ENCODE measurements at regions of chr7 and their contacts with region 1.

Region 1: DNA sequence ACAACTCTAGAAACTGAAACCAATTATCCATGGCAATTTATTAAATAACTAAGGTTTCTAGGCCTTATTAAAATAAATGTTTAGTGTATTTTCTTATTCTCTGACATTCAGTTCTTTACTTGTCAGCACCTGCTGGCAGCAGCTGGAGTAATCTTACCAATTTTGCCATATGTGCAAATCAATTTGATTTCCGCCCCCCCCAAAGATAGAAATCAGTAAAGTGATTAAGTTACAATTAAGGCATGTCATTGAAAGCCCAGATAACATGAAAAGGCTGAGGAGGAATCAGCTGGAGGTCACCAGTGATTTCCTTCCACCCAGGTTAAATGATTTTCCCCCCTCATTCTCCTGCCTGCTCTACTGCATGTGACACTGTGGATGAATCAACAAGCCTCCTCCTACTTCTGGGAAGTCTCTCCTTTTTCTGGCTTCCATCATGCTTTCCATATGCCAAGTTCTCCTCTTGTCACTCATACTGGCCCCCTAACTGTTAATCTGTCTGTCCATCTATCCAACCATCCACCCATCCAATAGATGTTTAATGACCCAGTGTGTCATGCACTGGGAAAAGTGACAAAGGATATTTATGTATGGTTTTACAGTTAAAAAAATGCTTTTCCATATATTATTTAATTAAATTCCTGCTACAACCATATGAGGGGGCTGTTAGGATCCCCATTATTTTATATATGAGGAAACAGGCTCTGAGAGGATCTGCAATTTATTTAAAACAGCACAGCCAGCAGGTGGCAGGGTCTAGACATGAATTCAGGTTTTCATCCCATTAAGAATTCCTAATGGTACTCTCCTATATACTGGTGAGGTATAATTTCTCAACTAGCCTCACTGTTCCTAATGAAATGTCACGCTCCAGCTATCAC is 116.5 kb downstream of the ATXN7L1 start:
- DNase-seq: peak; percentile 48
- H3K4me3 Mint-ChIP-seq: no peak overlapping the region
- H3K27ac Mint-ChIP-seq: no peak overlapping the region
- H3K4me1 Mint-ChIP-seq: peaks cover 28% of the 10 kb centered on the region
- H3K27me3 Mint-ChIP-seq: no peaks in the 10 kb centered on the region

Region 2: DNA sequence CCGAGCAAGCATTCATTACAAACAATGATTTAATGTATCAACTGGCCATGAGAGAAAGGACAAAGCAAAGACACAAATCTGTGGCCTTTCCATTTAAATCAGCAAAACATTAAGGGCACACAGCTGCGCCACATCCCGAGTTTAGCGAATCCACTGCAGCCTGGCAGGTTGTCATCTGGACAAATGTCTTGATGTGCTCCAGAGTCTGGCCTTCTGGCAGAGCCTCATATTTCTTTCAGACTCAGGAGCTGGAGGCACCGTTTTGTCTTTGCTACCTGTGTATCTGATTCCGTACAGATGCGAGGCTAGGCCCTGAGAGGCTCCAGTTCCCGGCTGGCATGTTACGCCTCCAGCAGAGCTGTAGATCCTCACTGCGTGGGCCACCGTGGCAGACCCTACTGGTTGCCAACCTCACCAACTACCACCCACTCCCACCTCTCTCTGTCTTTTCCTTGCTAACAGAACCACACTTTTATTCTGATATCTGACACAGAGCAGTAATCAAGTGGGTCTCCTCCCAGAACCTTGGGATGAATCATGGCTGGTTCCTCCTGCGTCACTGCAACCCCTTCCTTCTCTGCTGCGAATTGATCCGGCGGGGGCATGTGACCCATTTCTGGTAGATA is 137.7 kb before region 1 on chr7:
- CTCF ChIA-PET with region 1: no interaction called
- intact Hi-C with region 1: no loop called
- DNase-seq: no peak
- H3K4me3 Mint-ChIP-seq: no peak overlapping the region
- H3K27ac Mint-ChIP-seq: no peak overlapping the region
- H3K4me1 Mint-ChIP-seq: no peaks in the 10 kb centered on the region
- H3K27me3 Mint-ChIP-seq: no peaks in the 10 kb centered on the region

Region 3: GRCh38 chr7:105738133-105738532 is 21.8 kb before region 1 on chr7:
- CTCF ChIA-PET with region 1: interaction called, 12 read pairs
- intact Hi-C with region 1: no loop called
- DNase-seq: no peak
- H3K4me3 Mint-ChIP-seq: no peak overlapping the region
- H3K27ac Mint-ChIP-seq: no peak overlapping the region
- H3K4me1 Mint-ChIP-seq: peaks cover 4% of the 10 kb centered on the region
- H3K27me3 Mint-ChIP-seq: no peaks in the 10 kb centered on the region

Region 4: DNA sequence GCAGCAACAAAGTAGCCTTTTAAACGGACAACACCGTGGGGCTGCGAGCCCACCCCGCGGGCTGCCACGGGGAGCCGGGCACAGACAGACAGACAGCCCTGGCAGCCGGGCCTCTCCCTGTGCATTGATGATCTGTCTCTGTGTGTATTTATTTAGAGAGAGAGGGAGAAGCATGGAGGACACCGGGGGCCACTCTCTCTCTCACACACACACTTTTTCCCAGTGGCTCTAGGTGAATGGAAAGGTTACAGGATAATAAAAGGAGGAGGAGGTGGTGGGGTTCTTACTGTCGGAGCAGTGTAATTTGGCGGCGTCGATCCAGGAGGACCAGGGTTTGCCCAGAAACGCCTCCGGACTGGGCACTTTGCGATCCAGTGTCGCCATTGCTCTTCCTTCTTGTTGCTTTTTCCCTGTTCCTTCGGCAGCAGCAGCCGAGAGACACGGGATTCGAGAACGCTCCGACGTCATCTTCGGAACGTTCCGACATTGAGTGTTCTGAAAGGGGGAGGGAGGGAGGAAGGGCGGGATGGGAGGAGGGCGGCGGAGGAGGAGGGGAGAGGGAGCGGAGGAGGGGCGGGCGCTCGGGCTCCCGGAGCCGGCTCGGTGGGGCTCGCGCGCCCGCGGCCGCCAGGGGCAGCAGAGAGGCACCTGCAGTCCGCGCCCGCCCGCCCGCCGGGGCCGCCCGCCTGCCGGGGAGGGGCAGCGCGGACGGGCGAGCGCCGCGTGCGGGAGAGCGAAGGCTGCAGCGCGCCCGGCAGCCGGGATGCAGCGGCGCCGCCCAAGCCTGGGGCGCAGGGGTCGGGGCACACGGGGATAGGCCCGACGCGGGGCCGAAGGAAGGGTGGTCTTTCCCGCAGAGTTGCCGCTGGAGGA is 116.4 kb after region 1 on chr7 and contains the start of gene ATXN7L1:
- CTCF ChIA-PET with region 1: interaction called, 11 read pairs
- intact Hi-C with region 1: loop called (anchors 1 kb)
- DNase-seq: peak; percentile 93
- H3K4me3 Mint-ChIP-seq: peak within 1 kb of the TSS; percentile 91
- H3K27ac Mint-ChIP-seq: peak within 1 kb of the TSS; percentile 82
- H3K4me1 Mint-ChIP-seq: peaks cover 58% of the 10 kb centered on the region
- H3K27me3 Mint-ChIP-seq: no peaks in the 10 kb centered on the region
- total RNA-seq, gene ATXN7L1: 8.8 to 9.2 TPM

Region 5: DNA sequence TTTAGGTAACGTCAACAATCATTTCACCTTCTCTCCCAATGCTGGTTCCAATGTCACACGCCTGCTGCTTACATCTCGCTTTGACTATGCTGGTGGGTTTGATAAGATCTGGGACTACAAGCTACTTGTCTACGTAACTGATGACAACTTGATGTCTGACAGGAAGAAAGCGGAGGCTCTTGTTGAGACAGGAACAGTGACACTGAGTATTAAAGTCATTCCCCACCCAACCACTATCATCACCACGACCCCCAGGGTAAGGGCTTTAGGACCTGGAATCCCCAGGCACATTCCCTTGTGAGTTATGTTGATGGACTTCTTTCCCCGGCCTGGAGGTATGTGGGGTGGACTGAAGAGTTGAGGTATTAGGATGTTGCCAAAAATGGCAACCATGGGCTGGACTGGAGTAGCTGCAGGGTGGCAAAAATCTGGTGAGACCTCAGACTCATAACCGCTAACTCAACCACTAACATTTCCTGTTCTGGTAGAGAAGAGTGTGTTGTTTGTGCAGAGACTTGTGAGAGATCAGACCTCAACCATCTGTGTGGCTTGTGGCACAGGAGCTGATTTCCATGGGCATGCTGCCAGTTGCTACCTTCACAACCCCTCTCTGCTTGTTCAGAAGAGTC is 262.4 kb after region 1 on chr7:
- CTCF ChIA-PET with region 1: interaction called, 13 read pairs
- intact Hi-C with region 1: no loop called
- DNase-seq: peak; percentile 82
- H3K4me3 Mint-ChIP-seq: peak overlapping the region; percentile 19
- H3K27ac Mint-ChIP-seq: peak overlapping the region; percentile 62
- H3K4me1 Mint-ChIP-seq: peaks cover 71% of the 10 kb centered on the region
- H3K27me3 Mint-ChIP-seq: no peaks in the 10 kb centered on the region

Region 6: DNA sequence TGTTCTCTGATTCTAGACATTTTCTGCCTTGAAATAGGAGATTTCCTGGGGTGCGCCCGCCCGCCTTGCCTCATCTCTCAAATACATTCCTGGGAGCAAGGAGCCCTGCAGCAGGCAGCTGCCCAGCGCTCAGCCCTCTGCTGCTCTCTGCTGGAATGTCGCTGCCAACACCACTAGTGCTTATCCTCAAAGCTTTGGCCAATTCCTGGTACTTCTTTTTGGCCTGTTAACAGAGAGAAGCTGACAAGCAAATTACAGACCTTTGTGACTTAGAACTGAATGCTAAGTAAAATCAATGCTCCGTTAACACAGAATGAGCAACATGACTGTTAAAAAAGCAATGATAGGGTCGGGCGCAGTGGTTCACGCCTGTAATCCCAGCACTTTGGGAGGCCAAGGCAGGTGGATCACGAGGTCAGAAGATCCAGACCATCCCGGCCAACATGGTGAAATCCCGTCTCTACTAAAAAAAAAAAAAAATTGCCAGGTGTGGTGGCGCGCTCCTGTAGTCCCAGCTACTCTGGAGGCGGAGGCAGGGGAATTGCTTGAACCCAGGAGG is 394.1 kb after region 1 on chr7:
- CTCF ChIA-PET with region 1: no interaction called
- intact Hi-C with region 1: loop called (anchors 2 kb)
- DNase-seq: peak; percentile 84
- H3K4me3 Mint-ChIP-seq: no peak overlapping the region
- H3K27ac Mint-ChIP-seq: no peak overlapping the region
- H3K4me1 Mint-ChIP-seq: peaks cover 9% of the 10 kb centered on the region
- H3K27me3 Mint-ChIP-seq: peaks cover 14% of the 10 kb centered on the region